Posterior cingulate gyrus (tissue), 11 donors: ENCODE measurements at regions of chr22 and their contacts with region 1.

Region 1: GRCh38 chr22:26236991-26237390 is 67.7 kb downstream of the SEZ6L start:
- DNase-seq: no peak

Region 2: GRCh38 chr22:26188341-26188740 is 48.6 kb before region 1 on chr22:
- intact Hi-C with region 1: loop called (anchors 5 kb)
- DNase-seq: no peak